A549 (cell line): ENCODE measurements at regions of chr1 and their contacts with region 1.

Region 1: DNA sequence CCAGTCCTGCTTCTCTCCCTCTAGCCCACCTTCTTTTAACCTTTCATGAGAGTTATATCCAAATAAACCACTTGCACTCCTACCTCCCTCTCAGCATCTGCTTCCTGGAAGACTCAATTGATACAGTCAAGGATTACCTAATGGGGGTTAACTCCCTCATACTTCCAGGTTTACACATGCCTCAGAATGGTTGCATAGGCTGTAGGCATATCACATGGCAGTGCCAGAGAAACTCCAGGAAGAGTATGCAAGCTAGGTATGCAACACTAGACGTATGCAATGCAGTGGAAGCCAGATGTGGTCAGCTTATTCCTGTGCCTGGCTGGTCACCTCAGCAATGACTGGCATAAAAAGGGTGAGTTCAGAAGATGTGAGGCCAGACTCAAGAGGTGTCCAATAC is 32.7 kb upstream of the VANGL1 start:
- DNase-seq: no peak
- ATAC-seq: no peak
- H3K4me3 ChIP-seq: no peak overlapping the region
- H3K27ac ChIP-seq: no peak overlapping the region
- H3K4me1 ChIP-seq: no peaks in the 10 kb centered on the region
- CTCF ChIP-seq: no peak
- EP300 ChIP-seq: no peak
- POLR2A ChIP-seq: no peak
- RAD21 ChIP-seq: no peak

Region 2: GRCh38 chr1:115577513-115577912 is 31.5 kb before region 1 on chr1:
- CTCF ChIA-PET with region 1: no interaction called
- POLR2A ChIA-PET with region 1: no interaction called
- DNase-seq: no peak
- ATAC-seq: no peak
- H3K4me3 ChIP-seq: no peak overlapping the region
- H3K27ac ChIP-seq: no peak overlapping the region
- H3K4me1 ChIP-seq: no peaks in the 10 kb centered on the region
- CTCF ChIP-seq: no peak
- EP300 ChIP-seq: no peak
- POLR2A ChIP-seq: no peak
- RAD21 ChIP-seq: no peak

Region 3: GRCh38 chr1:115630342-115630741 is 21.3 kb after region 1 on chr1:
- CTCF ChIA-PET with region 1: interaction called, 10 read pairs
- POLR2A ChIA-PET with region 1: no interaction called
- DNase-seq: no peak
- ATAC-seq: no peak
- H3K4me3 ChIP-seq: no peak overlapping the region
- H3K27ac ChIP-seq: no peak overlapping the region
- H3K4me1 ChIP-seq: no peaks in the 10 kb centered on the region
- CTCF ChIP-seq: no peak
- EP300 ChIP-seq: no peak
- POLR2A ChIP-seq: no peak
- RAD21 ChIP-seq: no peak

Region 4: GRCh38 chr1:115706587-115707425 is 97.8 kb after region 1 on chr1:
- CTCF ChIA-PET with region 1: interaction called, 29 read pairs
- POLR2A ChIA-PET with region 1: no interaction called
- DNase-seq: peak in 1 of 2 experiments; percentile 31
- ATAC-seq: peak; percentile 59 to 78; a peak in 5 of 6 replicates
- H3K4me3 ChIP-seq: no peak overlapping the region
- H3K27ac ChIP-seq: no peak overlapping the region
- H3K4me1 ChIP-seq: no peaks in the 10 kb centered on the region
- CTCF ChIP-seq: peak; percentile 49
- EP300 ChIP-seq: no peak
- POLR2A ChIP-seq: no peak
- RAD21 ChIP-seq: peak; percentile 39 to 41; a peak in 3 of 5 replicates

Region 5: GRCh38 chr1:115764541-115764940 is 155.5 kb after region 1 on chr1:
- CTCF ChIA-PET with region 1: interaction called, 56 read pairs
- POLR2A ChIA-PET with region 1: no interaction called
- DNase-seq: peak; percentile 7 to 24
- ATAC-seq: peak; percentile 47 to 54; a peak in 4 of 6 replicates
- H3K4me3 ChIP-seq: no peak overlapping the region
- H3K27ac ChIP-seq: no peak overlapping the region
- H3K4me1 ChIP-seq: no peaks in the 10 kb centered on the region
- CTCF ChIP-seq: peak; percentile 41
- EP300 ChIP-seq: no peak
- POLR2A ChIP-seq: no peak
- RAD21 ChIP-seq: peak; percentile 53 to 57

Region 6: GRCh38 chr1:115771847-115772457 is 162.9 kb after region 1 on chr1:
- CTCF ChIA-PET with region 1: interaction called, 56 read pairs
- POLR2A ChIA-PET with region 1: no interaction called
- DNase-seq: peak; percentile 38 to 75
- ATAC-seq: peak; percentile 99
- H3K4me3 ChIP-seq: 0 out of 3 replicates have a peak overlapping the region, but pooled peaks have one; percentile 27
- H3K27ac ChIP-seq: peak overlapping the region; percentile 59 to 79; a peak in 5 of 6 replicates
- H3K4me1 ChIP-seq: peaks cover 4% of the 10 kb centered on the region; the same call in 1 of the 3 replicates
- CTCF ChIP-seq: peak; percentile 59
- EP300 ChIP-seq: no peak
- POLR2A ChIP-seq: no peak
- RAD21 ChIP-seq: peak; percentile 75 to 79

Region 7: DNA sequence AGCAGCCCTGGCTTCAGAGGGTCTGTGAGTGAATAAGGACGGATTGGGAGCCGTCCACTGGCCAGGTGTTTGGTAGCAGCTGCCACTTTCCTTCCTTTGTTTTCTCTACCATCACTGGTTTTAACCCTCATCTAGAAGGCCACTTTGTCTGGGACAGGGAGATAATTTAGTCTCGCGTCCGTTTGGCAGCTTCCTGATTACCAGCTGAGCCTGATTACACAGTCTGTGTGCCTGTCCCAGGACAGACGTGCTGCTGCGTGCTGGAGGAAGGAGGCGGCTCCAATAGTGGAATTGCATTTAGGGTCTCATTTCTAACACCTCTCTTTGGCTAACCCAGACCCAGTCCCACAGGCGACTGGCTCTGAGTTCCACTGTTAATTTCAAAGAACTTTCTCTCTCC is 184.1 kb after region 1 on chr1:
- CTCF ChIA-PET with region 1: no interaction called
- POLR2A ChIA-PET with region 1: no interaction called
- DNase-seq: no peak
- ATAC-seq: no peak
- H3K4me3 ChIP-seq: no peak overlapping the region
- H3K27ac ChIP-seq: no peak overlapping the region
- H3K4me1 ChIP-seq: no peaks in the 10 kb centered on the region
- CTCF ChIP-seq: no peak
- EP300 ChIP-seq: no peak
- POLR2A ChIP-seq: no peak
- RAD21 ChIP-seq: no peak